GM13976 (cell line): ENCODE measurements at regions of chr20 and their contacts with region 1.

Region 1: GRCh38 chr20:34768096-34768495 is 57.4 kb downstream of the NCOA6 start:
- DNase-seq: no peak
- CTCF ChIP-seq: no peak

Region 2: GRCh38 chr20:34083137-34083536 is 685.0 kb before region 1 on chr20:
- in situ Hi-C with region 1: no loop called
- DNase-seq: no peak
- CTCF ChIP-seq: no peak

Region 3: GRCh38 chr20:34355427-34355826 is 412.7 kb before region 1 on chr20:
- in situ Hi-C with region 1: no loop called
- DNase-seq: no peak
- CTCF ChIP-seq: no peak

Region 4: GRCh38 chr20:34538671-34539123 is 229.4 kb before region 1 on chr20:
- in situ Hi-C with region 1: loop called (anchors 10 kb)
- DNase-seq: peak; percentile 76
- CTCF ChIP-seq: peak; percentile 86

Region 5: DNA sequence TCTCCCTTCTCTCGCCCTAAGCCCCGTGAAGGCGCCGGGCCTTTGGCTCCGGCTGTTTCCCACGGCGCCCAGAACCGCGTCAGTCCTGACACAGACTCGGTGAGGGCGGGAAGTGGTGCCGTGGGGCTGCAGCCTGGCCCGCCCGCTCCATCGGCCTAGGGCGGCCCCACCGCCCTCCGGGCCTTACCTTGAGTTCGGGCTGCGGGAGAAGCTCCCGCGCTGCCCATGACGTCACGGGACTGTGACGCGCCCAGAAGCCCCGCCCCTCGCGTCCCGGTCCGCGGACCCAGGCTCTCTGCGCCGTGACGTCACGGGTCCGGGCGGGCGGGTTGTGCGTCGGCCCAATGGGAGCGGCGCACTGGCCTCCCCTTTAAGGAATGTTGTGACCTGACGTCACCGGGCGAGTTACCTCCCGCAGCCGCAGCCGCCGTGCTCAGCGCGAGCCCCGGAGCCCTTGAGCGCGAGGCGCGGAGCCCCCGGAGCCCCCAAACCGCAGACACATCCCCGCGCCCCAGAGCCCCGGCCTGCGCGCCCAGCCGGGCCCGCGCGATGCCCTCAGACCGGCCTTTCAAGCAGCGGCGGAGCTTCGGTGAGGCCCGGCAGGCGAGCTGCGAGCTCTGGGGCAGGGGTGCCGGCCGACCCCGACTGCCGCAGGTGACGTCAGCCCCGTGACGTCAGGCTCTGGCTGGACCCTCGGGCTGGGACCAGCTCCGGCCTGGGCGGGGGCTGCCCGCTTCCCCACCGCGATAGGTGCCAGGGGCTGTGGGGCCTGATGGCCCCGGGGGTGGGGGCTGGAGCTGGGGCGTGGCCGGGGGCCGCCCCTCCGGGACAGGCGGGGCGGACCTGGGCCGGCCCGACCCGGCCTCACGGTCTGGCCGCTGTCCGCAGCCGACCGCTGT is 209.5 kb before region 1 on chr20 and contains the start of gene MAP1LC3A:
- in situ Hi-C with region 1: loop called (anchors 10 kb)
- DNase-seq: peak; percentile 97
- CTCF ChIP-seq: no peak